ENCODE measurements at regions of chr9 and their contacts with region 1.

Region 1: DNA sequence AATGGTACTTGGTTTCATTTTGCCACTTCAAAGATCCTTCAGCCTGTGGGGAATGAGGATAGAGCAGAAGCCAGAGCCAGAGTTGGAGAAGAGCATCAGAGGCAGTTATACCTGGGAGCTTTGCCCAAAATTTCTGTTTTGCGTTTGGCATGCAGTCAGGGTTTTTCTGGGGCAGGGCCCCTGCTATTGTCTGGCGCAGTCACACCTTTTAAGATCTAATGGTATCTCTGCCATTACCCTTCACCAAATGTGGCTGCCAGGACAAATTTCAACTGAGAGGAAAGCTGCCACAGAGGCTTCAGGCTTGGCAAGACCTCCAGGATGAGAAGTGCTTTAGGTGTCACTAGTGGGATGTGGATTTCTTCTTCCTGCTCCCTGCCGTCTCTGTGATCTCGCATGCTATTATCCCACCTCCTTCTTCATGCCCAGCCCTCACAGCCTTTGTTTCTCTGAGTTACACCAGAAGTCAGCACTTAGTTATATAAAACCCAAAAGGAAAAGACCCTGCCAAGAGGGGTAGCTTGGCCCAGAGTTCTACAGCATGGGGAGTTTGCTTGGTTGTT is 357.0 kb downstream of the TLE4 start:
- DNase-seq: no peak
- H3K4me3 Mint-ChIP-seq: no peak overlapping the region
- H3K27ac Mint-ChIP-seq: no peak overlapping the region
- H3K4me1 Mint-ChIP-seq: no peaks in the 10 kb centered on the region
- H3K27me3 Mint-ChIP-seq: peaks cover 4% of the 10 kb centered on the region

Region 2: GRCh38 chr9:79701651-79702050 is 227.1 kb before region 1 on chr9:
- intact Hi-C with region 1: no loop called
- DNase-seq: no peak
- H3K4me3 Mint-ChIP-seq: no peak overlapping the region
- H3K27ac Mint-ChIP-seq: no peak overlapping the region
- H3K4me1 Mint-ChIP-seq: peaks cover 5% of the 10 kb centered on the region
- H3K27me3 Mint-ChIP-seq: no peaks in the 10 kb centered on the region

Region 3: GRCh38 chr9:79883073-79883645 is 45.6 kb before region 1 on chr9:
- intact Hi-C with region 1: loop called (anchors 5 kb)
- DNase-seq: no peak
- H3K4me3 Mint-ChIP-seq: no peak overlapping the region
- H3K27ac Mint-ChIP-seq: no peak overlapping the region
- H3K4me1 Mint-ChIP-seq: peaks cover 42% of the 10 kb centered on the region
- H3K27me3 Mint-ChIP-seq: peaks cover 1% of the 10 kb centered on the region

Region 4: DNA sequence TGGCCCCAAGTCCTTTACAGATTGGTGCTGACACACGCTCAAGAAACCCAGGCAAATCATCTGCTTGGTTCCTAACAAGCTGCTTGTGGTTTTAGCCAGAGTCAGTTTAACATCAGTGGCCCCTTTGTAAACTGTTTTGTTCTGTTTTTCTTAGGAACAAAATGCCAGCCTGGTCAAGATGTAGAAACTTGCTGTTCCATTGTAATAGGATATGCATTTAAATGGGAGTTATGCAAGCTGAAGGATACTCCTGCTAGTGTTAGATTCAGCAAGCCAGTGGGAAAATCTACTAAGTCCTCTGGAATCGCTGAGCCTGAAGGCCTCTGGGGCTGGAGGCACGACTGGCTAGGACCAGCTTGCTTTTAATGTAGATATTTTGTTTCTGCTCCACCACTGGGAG is 34.1 kb after region 1 on chr9:
- intact Hi-C with region 1: no loop called
- DNase-seq: no peak
- H3K4me3 Mint-ChIP-seq: no peak overlapping the region
- H3K27ac Mint-ChIP-seq: no peak overlapping the region
- H3K4me1 Mint-ChIP-seq: no peaks in the 10 kb centered on the region
- H3K27me3 Mint-ChIP-seq: no peaks in the 10 kb centered on the region

Measured in activated T-helper 1 cell treated with anti-CD3 and anti-CD28 coated beads, Interleukin-12 subunit alpha, Interleukin-12 subunit beta, Interleukin-2, Interleukin-4 antibody, amounts not matched to agents 30 ng/mL and 10 ng/mL and 1 ng/mL, durations not matched to agents 14 hours and 24 hours and 36 hours (primary cell).